Activated T-helper 1 cell treated with anti-CD3 and anti-CD28 coated beads, Interleukin-12 subunit alpha, Interleukin-12 subunit beta, Interleukin-2, Interleukin-4 antibody, amounts not matched to agents 30 ng/mL and 10 ng/mL and 1 ng/mL, durations not matched to agents 14 hours and 24 hours and 36 hours (primary cell): ENCODE measurements at regions of chr1 and their contacts with region 1.

Region 1: GRCh38 chr1:45750298-45751038 is at the start of gene IPP:
- DNase-seq: peak; percentile 96
- H3K4me3 Mint-ChIP-seq: peak within 1 kb of the TSS; percentile 98
- H3K27ac Mint-ChIP-seq: peak within 1 kb of the TSS; percentile 96
- H3K4me1 Mint-ChIP-seq: peaks cover 10% of the 10 kb centered on the region
- H3K27me3 Mint-ChIP-seq: no peaks in the 10 kb centered on the region
- total RNA-seq, gene IPP: 12.3 and 13.9 TPM in 2 replicates

Region 2: GRCh38 chr1:45721207-45721606 is 29.3 kb before region 1 on chr1:
- intact Hi-C with region 1: no loop called
- DNase-seq: no peak
- H3K4me3 Mint-ChIP-seq: no peak overlapping the region
- H3K27ac Mint-ChIP-seq: no peak overlapping the region
- H3K4me1 Mint-ChIP-seq: no peaks in the 10 kb centered on the region
- H3K27me3 Mint-ChIP-seq: no peaks in the 10 kb centered on the region

Region 3: GRCh38 chr1:45803301-45803780 is 52.9 kb after region 1 on chr1 and contains the start of gene MAST2:
- intact Hi-C with region 1: loop called (anchors 1 kb)
- DNase-seq: peak; percentile 87
- H3K4me3 Mint-ChIP-seq: peak within 1 kb of the TSS; percentile 99
- H3K27ac Mint-ChIP-seq: peak within 1 kb of the TSS; percentile 93
- H3K4me1 Mint-ChIP-seq: peaks cover 32% of the 10 kb centered on the region
- H3K27me3 Mint-ChIP-seq: no peaks in the 10 kb centered on the region
- total RNA-seq, gene MAST2: 32.0 and 37.2 TPM in 2 replicates

Region 4: DNA sequence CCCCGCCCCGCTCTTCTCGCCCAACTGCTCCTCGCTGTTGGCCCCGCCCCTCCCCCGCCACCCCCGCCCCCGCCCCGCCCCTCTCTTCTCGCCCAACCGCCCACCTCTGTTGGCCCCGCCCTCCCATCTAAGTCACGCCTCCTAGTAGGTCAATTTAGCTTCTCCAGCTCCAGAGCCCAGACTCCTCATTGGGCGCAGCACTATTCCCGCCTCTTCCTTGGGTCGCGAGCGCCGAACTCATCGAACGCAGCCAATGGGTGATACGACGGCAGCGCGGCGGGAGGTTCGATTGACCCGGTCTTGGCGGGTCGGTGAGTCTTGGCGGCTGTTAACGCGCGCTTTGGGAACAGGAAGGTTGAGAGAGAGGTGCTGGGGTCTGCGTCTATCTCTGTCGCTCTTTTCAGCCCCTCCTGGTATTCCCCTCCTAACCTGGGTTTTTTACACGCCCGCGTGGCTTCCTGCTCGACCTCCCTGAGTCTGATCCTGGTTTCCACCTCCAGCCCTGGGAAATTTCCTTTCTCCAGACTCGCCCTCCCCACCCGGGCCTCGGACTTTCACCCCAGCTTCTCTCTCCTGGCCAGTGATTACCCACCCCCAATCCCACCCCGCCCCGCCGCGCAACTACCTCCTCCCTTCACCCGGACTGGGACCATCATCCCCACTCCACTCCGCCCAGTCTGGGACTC is 497.1 kb after region 1 on chr1 and contains the start of gene RAD54L:
- intact Hi-C with region 1: loop called (anchors 2 kb)
- DNase-seq: peak; percentile 95
- H3K4me3 Mint-ChIP-seq: peak within 1 kb of the TSS; percentile 97
- H3K27ac Mint-ChIP-seq: peak within 1 kb of the TSS; percentile 94
- H3K4me1 Mint-ChIP-seq: peaks cover 39% of the 10 kb centered on the region
- H3K27me3 Mint-ChIP-seq: no peaks in the 10 kb centered on the region
- total RNA-seq, gene RAD54L: 49.7 and 50.2 TPM in 2 replicates